Activated T-helper 2 cell treated with anti-CD3 and anti-CD28 coated beads, Interferon-gamma antibody, Interleukin-2, Interleukin-4, amounts not matched to agents 10 μg/mL and 5 μg/mL and 100 μg/mL, durations not matched to agents 14 hours and 24 hours and 36 hours (primary cell): ENCODE measurements at regions of chr15 and their contacts with region 1.

Region 1: GRCh38 chr15:48285329-48286214 is 45.7 kb upstream of the DUT start:
- DNase-seq: peak; percentile 18
- H3K4me3 Mint-ChIP-seq: no peak overlapping the region
- H3K27ac Mint-ChIP-seq: no peak overlapping the region
- H3K4me1 Mint-ChIP-seq: peaks cover 4% of the 10 kb centered on the region
- H3K27me3 Mint-ChIP-seq: peaks cover 8% of the 10 kb centered on the region

Region 2: DNA sequence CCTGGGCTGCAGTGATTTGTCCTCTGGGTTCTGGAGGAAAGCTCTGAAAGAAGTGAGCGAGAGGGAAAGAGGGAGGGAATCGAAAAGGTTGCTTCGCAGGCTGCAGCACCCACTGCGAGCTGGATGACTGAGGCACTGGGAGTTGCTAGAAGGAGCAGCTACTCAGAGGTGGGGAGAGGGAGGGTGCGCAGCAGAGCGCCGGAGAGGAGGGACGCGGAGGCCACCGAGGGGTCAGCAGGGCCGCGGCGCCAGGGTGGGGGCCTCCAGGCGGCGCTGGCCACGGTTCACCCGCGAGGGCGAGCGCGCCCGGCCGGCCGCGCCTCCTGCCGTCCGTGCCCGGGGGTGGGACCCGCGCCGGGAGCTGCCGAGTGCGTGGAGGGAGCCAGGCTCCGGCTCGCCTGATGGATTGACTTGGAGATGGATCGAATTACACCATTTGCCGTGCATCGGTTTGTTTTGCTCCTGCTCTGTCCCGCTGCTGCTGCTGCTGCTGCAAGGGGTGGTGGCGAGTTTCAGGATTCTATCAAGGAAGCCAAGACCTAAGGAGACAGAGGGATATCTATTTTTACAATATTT is 568.4 kb before region 1 on chr15 and contains the start of gene SEMA6D:
- intact Hi-C with region 1: loop called (anchors 10 kb)
- DNase-seq: no peak
- H3K4me3 Mint-ChIP-seq: no peak within 1 kb of the TSS
- H3K27ac Mint-ChIP-seq: no peak within 1 kb of the TSS
- H3K4me1 Mint-ChIP-seq: no peaks in the 10 kb centered on the region
- H3K27me3 Mint-ChIP-seq: peaks cover 57% of the 10 kb centered on the region
- total RNA-seq, gene SEMA6D: not detected in 2 replicates

Region 3: DNA sequence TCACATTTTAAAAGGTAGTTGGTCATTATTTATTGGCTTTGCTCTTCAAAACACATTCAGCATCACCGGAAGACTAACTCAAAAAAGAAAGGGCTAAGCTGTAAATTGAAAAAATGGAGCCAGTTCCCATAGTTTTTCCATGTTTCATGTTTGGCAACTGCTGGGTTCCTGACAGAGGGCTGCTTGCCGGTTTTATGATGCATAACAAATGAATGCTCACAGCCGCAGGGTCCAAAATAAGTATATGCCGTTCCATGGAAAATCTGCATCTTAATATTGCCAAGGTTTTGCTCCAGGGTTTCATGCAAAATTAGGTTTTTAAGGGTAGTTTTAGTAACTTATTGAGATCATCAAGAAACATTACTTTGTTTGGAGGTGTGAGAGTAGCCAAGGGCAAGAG is 63.7 kb before region 1 on chr15:
- intact Hi-C with region 1: no loop called
- DNase-seq: no peak
- H3K4me3 Mint-ChIP-seq: no peak overlapping the region
- H3K27ac Mint-ChIP-seq: no peak overlapping the region
- H3K4me1 Mint-ChIP-seq: no peaks in the 10 kb centered on the region
- H3K27me3 Mint-ChIP-seq: peaks cover 6% of the 10 kb centered on the region

Region 4: GRCh38 chr15:48766196-48766595 is 480.6 kb after region 1 on chr15:
- intact Hi-C with region 1: no loop called
- DNase-seq: no peak
- H3K4me3 Mint-ChIP-seq: no peak overlapping the region
- H3K27ac Mint-ChIP-seq: no peak overlapping the region
- H3K4me1 Mint-ChIP-seq: peaks cover 15% of the 10 kb centered on the region
- H3K27me3 Mint-ChIP-seq: no peaks in the 10 kb centered on the region